Right ventricle myocardium inferior (tissue), 1 donor: ENCODE measurements at regions of chr12 and their contacts with region 1.

Region 1: GRCh38 chr12:121579981-121580868 is 598 bp downstream of the KDM2B start:
- DNase-seq: peak; percentile 88
- ATAC-seq: peak; percentile 67

Region 2: GRCh38 chr12:121536899-121537813 is 43.1 kb before region 1 on chr12:
- intact Hi-C with region 1: loop called (anchors 5 kb)
- DNase-seq: peak; percentile 97
- ATAC-seq: peak; percentile 87

Region 3: GRCh38 chr12:121678716-121679580 is 98.7 kb after region 1 on chr12:
- intact Hi-C with region 1: no loop called
- DNase-seq: no peak
- ATAC-seq: no peak

Region 4: GRCh38 chr12:121811434-121812319 is 231.5 kb after region 1 on chr12:
- intact Hi-C with region 1: no loop called
- DNase-seq: peak; percentile 89
- ATAC-seq: peak; percentile 89

Region 5: DNA sequence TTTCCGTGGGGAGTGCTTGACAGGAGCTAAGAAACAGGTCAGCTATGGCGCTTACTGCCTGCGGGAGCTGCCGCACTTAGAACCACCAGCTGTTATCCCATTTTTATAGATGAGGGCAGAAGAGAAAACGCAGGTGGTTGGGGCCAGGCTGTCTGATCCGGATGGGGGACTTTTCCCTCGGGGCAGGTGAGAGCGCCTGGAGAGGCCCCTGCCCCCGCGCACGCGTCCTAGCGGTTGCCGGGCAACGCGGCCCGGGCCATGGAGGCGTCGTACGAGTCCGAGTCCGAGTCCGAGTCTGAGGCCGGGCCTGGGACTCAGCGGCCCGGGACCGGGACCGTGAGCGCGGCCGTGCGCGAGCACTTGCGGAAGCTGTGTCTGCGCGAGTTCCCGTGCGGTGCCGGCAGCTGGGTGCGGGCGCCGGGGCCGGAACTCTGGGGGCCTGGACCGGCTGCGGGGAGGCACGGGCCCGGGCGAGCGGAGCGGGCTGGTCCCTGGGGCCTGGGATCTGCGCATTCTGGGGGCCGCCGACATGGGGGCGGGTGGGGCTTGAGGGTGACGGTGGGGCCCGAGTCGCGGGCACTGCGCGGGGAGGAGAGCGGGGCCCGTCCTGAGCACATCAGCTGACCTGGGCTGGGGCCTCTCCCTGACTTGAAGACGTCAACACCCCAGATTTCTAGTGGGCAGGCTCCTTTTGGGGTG is 602.8 kb after region 1 on chr12 and contains the start of gene LRRC43:
- intact Hi-C with region 1: no loop called
- DNase-seq: peak; percentile 68
- ATAC-seq: peak; percentile 53
- total RNA-seq, gene LRRC43: 0.70 TPM